AG04450 (cell line): ENCODE measurements at regions of chr1 and their contacts with region 1.

Region 1: DNA sequence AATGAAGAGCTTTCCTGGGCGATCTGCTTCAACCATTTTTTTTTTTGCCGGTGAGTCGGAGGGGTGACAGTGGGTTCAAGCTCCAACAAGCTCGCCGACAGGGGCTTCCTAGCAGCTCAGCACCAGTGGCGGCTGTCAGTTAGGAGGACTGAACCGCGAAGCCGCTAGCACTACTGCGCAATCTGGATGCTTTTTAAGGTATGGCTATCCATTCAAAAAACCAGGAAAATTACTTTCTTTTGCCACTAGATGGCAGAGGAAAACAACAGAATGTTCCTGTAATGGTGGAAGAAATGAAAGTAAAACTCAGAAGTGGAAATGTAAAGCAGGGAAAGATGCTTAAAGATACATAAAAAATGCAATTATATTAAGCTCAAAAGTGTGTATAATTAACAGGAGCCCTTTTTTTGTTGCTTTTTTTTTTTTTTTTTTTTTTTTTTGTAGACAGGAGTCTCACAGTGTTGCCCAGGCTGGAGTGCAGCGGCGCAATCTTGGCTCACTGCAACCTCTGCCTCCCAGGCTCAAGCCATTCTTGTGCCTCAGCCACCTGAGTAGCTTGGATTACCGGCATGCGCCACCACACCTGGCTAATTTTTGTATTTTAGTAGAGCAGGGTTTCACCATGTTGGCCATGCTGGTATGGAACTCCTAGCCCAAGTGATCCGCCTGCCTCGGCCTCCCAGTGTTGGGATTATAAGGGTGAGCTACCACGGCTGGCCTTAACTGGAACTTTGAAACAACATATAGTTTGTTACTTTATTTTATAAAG is 8.5 kb downstream of the KYAT3 start:
- DNase-seq: no peak
- H3K4me3 ChIP-seq: peak overlapping the region; percentile 31; the same call in 1 of the 2 replicates
- H3K27ac ChIP-seq: peak overlapping the region; percentile 66
- H3K27me3 ChIP-seq: no peaks in the 10 kb centered on the region
- CTCF ChIP-seq: peak; percentile 65

Region 2: DNA sequence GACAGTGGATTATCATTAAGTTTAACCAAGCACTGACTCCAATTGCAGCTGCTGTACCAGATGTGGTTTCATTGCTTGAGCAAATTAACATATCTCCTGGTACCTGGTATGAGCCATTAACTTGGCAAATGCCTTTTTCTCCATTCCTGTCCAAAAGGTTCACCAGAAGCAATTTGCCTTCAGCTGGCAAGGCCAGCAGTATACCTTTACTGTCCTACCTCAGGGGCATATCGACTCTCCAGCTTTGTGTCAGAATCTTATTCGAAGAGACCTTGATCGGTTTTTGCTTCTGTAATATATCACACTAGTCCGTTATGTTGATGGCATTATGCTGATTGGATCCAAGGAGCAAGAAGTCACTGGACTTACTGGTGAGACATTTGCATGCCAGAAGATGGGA is 83.1 kb before region 1 on chr1:
- CTCF ChIA-PET with region 1: no interaction called
- POLR2A ChIA-PET with region 1: no interaction called
- DNase-seq: no peak
- H3K4me3 ChIP-seq: no peak overlapping the region
- H3K27ac ChIP-seq: no peak overlapping the region
- H3K27me3 ChIP-seq: no peaks in the 10 kb centered on the region
- CTCF ChIP-seq: no peak

Region 3: DNA sequence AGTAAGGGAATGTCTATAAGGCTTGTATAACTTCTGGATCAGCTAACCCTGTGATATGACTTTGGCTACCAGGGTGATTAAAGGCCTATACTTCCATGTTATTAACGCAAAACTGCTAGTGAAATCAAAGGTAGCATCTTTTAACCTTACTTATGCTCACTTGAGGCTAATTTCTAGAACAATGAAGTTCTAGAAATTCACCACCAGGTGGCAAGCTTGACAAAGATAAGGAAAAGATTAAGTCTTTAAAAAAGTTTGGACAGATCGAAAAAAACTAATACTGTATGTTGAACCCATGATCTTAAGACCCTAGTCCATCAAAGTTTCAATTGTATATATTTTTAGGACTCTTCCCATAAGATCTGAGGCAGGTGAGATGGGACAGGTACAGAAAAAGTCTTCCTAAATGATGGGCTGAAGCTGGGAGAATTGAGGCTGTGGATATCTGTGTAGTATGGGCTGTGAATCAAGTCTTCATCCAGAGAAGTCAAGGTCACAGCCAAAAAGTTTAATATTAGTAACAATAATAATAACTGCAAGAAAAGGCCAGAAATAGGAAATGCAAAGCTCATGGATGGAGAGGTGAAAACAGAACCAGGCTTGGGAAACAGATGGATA is 10.3 kb before region 1 on chr1:
- CTCF ChIA-PET with region 1: interaction called, 84 read pairs
- POLR2A ChIA-PET with region 1: no interaction called
- DNase-seq: no peak
- H3K4me3 ChIP-seq: no peak overlapping the region
- H3K27ac ChIP-seq: no peak overlapping the region
- H3K27me3 ChIP-seq: no peaks in the 10 kb centered on the region
- CTCF ChIP-seq: peak; percentile 65

Region 4: DNA sequence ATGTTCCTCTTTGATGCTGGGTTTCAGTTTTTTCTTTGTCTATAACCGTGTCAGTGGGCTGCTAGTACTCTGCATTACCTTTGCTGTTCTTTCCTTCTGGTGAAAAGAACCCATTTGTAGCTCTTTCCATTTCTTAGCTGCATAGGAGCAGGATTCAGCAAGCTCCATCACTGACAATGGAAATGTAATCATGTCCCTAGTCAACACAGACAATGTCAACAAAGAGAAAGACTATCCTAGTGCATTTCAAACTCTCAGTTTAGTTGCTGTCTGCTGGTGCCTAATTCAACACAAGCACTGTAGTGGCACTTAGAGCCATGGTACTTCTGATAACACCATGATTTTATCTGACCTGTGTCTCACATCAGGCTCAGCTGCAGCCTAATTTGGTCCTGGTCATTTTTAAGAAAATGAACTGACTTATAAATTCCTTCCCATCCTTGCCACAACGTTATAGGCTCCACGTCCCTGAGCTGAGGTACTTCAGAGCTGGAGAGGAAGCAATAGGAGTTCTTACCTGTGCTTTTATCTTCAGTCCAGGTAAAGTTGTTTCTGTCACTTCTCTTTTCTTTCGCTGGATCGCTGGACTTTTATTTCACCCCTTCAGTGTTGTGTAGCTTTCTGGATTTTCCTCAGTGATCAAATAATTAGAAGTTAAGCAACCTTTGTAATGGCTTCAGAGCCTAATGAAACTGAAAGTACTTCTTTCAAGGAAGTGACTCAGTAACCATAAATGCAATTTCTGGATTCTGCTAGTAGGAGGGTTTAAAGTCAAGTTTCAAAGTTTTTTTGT is 38.4 kb after region 1 on chr1 and contains the start of gene GBP3:
- CTCF ChIA-PET with region 1: interaction called, 29 read pairs
- POLR2A ChIA-PET with region 1: no interaction called
- DNase-seq: peak; percentile 11
- H3K4me3 ChIP-seq: peak within 1 kb of the TSS; percentile 79
- H3K27ac ChIP-seq: peak within 1 kb of the TSS; percentile 83
- H3K27me3 ChIP-seq: no peaks in the 10 kb centered on the region
- CTCF ChIP-seq: no peak
- polyA plus RNA-seq, gene GBP3: 77.1 and 94.1 TPM in 2 replicates

Region 5: DNA sequence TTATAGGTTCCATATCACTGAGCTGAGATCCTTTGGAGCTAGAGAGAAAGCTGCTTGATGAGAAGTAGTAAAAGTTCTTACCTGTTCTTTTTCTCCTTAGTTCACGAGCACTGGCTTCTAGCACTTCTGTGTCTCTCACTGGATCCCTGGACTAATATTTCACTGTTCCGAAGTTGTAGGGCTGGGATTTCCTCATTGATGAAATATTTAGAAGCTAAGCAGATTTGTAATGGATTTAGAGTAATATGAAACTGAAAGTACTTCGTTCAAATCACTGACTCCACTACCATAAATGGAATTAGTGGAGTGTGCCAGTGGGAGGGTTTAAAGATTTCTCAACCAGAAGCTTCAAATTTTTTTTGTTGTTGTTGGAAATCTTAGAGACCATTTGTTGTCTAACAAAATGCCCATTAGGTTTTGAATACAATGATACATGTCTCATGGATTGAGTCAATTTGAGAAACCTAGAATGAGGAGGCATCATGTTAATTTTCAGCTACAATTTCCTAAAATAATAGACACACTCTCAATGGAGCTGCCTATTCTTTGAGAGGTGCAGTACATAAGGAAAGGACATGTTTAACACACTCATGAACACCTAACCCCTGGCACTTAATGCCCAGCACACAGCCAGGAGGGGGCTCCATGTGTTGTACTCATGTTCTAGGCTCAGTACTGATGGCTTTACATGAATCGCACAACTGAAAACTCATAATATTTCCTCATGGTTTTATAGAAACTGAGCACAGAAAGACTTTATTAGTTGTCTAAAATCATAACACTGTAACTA is 81.3 kb after region 1 on chr1 and contains the start of gene GBP1:
- CTCF ChIA-PET with region 1: interaction called, 17 read pairs
- POLR2A ChIA-PET with region 1: no interaction called
- DNase-seq: peak; percentile 78
- H3K4me3 ChIP-seq: peak within 1 kb of the TSS; percentile 77
- H3K27ac ChIP-seq: peak within 1 kb of the TSS; percentile 95
- H3K27me3 ChIP-seq: no peaks in the 10 kb centered on the region
- CTCF ChIP-seq: no peak
- polyA plus RNA-seq, gene GBP1: 86.2 and 103 TPM in 2 replicates

Region 6: DNA sequence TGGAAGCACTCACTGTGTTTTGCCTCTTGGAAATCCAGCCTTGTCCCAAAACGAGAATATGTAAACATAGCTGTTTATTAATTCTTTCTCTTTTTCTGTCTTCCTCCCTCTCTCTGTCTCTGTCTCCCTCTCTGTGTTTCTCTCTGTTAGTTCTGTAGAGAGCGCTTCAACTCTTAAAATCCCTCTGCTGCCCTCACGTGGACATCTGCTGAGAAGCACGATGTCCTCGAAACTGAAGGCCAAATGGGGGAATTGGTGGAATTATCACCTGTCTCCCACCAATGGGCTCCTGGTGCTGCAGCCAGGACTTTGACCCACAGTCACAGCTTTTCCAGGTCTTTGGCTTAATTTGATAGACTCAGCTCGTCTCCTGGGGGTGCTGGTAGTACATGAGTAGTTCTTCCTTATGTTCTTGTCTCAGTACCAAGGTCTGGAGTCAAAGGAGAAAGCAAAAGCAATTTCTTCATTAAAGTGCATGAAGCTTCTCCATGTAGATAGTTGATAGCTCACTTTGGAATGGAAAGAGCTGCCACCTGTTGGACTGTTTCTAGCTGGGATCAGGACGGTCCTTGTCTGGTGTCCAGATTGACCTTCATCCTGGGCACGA is 374.4 kb after region 1 on chr1:
- CTCF ChIA-PET with region 1: interaction called, 27 read pairs
- POLR2A ChIA-PET with region 1: no interaction called
- DNase-seq: peak; percentile 36
- H3K4me3 ChIP-seq: no peak overlapping the region
- H3K27ac ChIP-seq: no peak overlapping the region
- H3K27me3 ChIP-seq: no peaks in the 10 kb centered on the region
- CTCF ChIP-seq: peak; percentile 77